Transverse colon (tissue), 4 donors: ENCODE measurements at regions of chr4 and their contacts with region 1.

Region 1: GRCh38 chr4:168933423-168933822 is 76.6 kb downstream of the CBR4 start:
- DNase-seq: no peak
- H3K4me3 ChIP-seq: no peak overlapping the region
- H3K27ac ChIP-seq: no peak overlapping the region
- H3K4me1 ChIP-seq: no peaks in the 10 kb centered on the region
- H3K27me3 ChIP-seq: no peaks in the 10 kb centered on the region
- CTCF ChIP-seq: no peak
- EP300 ChIP-seq: no peak
- POLR2A ChIP-seq: no peak

Region 2: DNA sequence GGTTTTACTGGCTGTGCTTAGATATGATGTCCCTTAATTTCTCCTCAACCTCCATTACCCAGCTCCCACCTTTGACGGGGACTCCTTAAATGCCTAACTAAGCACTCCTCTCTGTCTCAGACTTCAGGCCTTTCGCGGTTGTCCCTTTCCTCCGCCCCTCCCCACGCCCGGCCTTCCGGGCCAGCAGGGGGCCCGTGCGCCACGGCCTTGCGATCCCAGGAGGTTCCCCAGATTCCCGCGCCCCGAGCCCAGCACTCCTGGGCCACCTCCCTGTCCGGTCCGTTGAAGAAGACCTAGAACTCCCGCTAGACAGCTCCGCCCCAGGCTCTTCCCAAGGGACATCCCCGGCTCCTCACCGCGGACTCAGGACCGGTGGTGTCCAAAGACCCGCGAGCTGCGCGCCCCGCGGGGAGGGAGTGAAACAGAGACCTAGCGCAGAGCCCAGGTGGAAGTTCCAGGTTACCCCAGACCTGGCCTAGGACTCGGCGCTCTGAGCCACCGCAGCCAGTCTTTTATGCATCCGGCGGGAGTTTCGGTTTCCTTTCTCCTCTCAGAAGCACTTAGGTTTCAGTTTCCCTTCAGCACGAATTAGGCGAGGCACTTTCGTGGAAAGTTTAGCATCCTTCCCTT is 615.0 kb before region 1 on chr4 and contains the start of gene DDX60:
- in situ Hi-C with region 1: no loop called
- intact Hi-C with region 1: no loop called
- DNase-seq: peak; percentile 88
- H3K4me3 ChIP-seq: peak within 1 kb of the TSS; percentile 22 to 89 (median 62)
- H3K27ac ChIP-seq: peak within 1 kb of the TSS; percentile 85 to 97 (median 91)
- H3K4me1 ChIP-seq: peaks cover 0 to 45% (median 24%) of the 10 kb centered on the region in 4 donors
- H3K27me3 ChIP-seq: no peaks in the 10 kb centered on the region
- CTCF ChIP-seq: peak; percentile 39 to 72 (median 46)
- EP300 ChIP-seq: no peak
- POLR2A ChIP-seq: peak; percentile 82
- total RNA-seq, gene DDX60: 26.9 to 119 (median 52.5) TPM

Region 3: DNA sequence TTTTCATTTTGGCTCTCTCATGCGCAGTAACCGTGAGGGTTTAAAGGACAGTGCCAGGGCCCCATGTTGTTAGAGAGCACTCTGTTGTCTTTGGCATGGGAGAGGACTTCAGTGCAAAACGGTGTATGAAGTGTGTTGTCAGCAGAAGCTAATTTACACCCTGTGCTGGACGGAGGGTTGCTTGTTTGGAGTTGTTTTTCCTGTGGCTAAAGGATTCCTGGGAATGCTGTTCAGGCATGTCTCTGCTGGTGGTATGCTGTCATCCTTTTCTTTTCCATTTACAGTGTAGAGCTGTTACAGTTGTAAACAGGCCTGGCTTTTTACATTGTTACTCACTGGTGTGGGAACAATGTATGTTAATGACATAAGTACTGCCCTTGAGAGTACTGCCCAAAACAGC is 129.7 kb before region 1 on chr4:
- in situ Hi-C with region 1: no loop called
- intact Hi-C with region 1: no loop called
- DNase-seq: no peak
- H3K4me3 ChIP-seq: no peak overlapping the region
- H3K27ac ChIP-seq: peak overlapping the region in 3 of 4 donors; percentile 4 to 51 (median 43)
- H3K4me1 ChIP-seq: peaks cover 0 to 9% (median 2%) of the 10 kb centered on the region in 4 donors
- H3K27me3 ChIP-seq: no peaks in the 10 kb centered on the region
- CTCF ChIP-seq: no peak
- EP300 ChIP-seq: no peak
- POLR2A ChIP-seq: no peak

Region 4: DNA sequence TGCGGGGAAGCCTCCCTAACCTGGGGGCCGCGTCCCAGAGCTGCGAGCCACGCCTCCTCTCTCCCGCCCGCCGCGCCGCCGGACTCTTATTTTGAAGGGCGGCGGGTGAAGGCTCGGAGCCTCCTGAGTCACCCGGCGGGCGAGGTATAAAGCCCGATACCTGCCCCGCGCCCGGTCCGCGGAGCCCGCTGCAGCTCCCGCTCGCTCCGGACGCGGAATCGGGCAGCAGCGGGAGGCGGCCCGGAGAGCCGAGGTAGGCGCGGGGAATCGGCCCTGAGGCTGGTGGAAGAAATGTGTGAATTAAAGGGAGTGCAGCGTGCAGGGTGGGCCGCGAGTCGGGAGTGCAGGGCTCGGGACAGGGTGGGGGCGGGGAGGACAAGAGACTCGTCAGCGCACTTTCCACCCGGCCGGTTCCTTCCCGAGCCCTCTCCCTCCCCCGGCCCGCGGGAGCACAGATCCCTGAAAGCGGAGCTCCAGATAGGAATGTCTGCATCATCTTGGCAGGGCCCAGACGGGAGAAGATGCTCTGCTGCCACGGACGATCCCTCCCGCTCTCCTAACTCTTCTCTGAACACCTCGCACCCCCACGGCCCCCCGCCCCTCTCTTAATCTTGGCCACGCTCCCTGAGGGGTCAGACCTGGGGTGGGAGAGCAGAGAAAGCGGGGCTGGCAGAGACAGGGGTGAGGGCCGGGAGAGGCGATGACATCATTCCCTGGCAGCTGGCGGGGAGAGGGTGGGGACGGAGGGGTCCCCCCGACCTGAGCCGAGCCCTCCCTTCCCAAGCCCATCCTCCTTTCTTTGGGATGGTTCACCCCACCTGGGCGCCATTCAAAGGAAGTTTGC is 101.3 kb before region 1 on chr4:
- in situ Hi-C with region 1: no loop called
- intact Hi-C with region 1: no loop called
- DNase-seq: peak; percentile 85
- H3K4me3 ChIP-seq: peak overlapping the region; percentile 63 to 85 (median 75)
- H3K27ac ChIP-seq: peak overlapping the region; percentile 90 to 93 (median 92)
- H3K4me1 ChIP-seq: peaks cover 0 to 14% (median 8%) of the 10 kb centered on the region in 4 donors
- H3K27me3 ChIP-seq: peaks cover 4% of the 10 kb centered on the region
- CTCF ChIP-seq: no peak
- EP300 ChIP-seq: no peak
- POLR2A ChIP-seq: peak; percentile 89

Region 5: GRCh38 chr4:168900080-168900479 is 33.3 kb before region 1 on chr4:
- in situ Hi-C with region 1: no loop called
- intact Hi-C with region 1: loop called (anchors 1 kb)
- DNase-seq: no peak
- H3K4me3 ChIP-seq: no peak overlapping the region
- H3K27ac ChIP-seq: peak overlapping the region in 1 of 4 donors; percentile 32
- H3K4me1 ChIP-seq: no peaks in the 10 kb centered on the region
- H3K27me3 ChIP-seq: no peaks in the 10 kb centered on the region
- CTCF ChIP-seq: no peak
- EP300 ChIP-seq: no peak
- POLR2A ChIP-seq: no peak

Region 6: GRCh38 chr4:169540774-169541173 is 607.4 kb after region 1 on chr4:
- in situ Hi-C with region 1: no loop called
- intact Hi-C with region 1: no loop called
- DNase-seq: no peak
- H3K4me3 ChIP-seq: no peak overlapping the region
- H3K27ac ChIP-seq: no peak overlapping the region
- H3K4me1 ChIP-seq: no peaks in the 10 kb centered on the region
- H3K27me3 ChIP-seq: no peaks in the 10 kb centered on the region
- CTCF ChIP-seq: no peak
- EP300 ChIP-seq: no peak
- POLR2A ChIP-seq: no peak